Caco-2 (cell line): ENCODE measurements at regions of chr10 and their contacts with region 1.

Region 1: GRCh38 chr10:4391683-4392082 is 434.3 kb upstream of the AKR1E2 start:
- DNase-seq: peak in 1 of 2 experiments; percentile 25
- H3K4me3 ChIP-seq: no peak overlapping the region
- H3K4me3 Mint-ChIP-seq: no peak overlapping the region
- H3K27ac Mint-ChIP-seq: no peak overlapping the region
- H3K4me1 ChIP-seq: no peaks in the 10 kb centered on the region
- H3K4me1 Mint-ChIP-seq: no peaks in the 10 kb centered on the region
- H3K27me3 ChIP-seq: no peaks in the 10 kb centered on the region
- H3K27me3 Mint-ChIP-seq: peaks cover 14% of the 10 kb centered on the region
- CTCF ChIP-seq: peak in 1 of 2 experiments; percentile 25

Region 2: GRCh38 chr10:4329225-4329624 is 62.5 kb before region 1 on chr10:
- CTCF ChIA-PET with region 1: no interaction called
- POLR2A ChIA-PET with region 1: no interaction called
- intact Hi-C with region 1: loop called (anchors 2 kb)
- DNase-seq: no peak
- H3K4me3 ChIP-seq: no peak overlapping the region
- H3K4me3 Mint-ChIP-seq: no peak overlapping the region
- H3K27ac Mint-ChIP-seq: no peak overlapping the region
- H3K4me1 ChIP-seq: no peaks in the 10 kb centered on the region
- H3K4me1 Mint-ChIP-seq: no peaks in the 10 kb centered on the region
- H3K27me3 ChIP-seq: no peaks in the 10 kb centered on the region; the same call in 1 of the 2 replicates
- H3K27me3 Mint-ChIP-seq: peaks cover 13% of the 10 kb centered on the region
- CTCF ChIP-seq: no peak

Region 3: GRCh38 chr10:4372601-4373000 is 19.1 kb before region 1 on chr10:
- CTCF ChIA-PET with region 1: no interaction called
- POLR2A ChIA-PET with region 1: no interaction called
- intact Hi-C with region 1: loop called (anchors 1 kb)
- DNase-seq: no peak
- H3K4me3 ChIP-seq: no peak overlapping the region
- H3K4me3 Mint-ChIP-seq: no peak overlapping the region
- H3K27ac Mint-ChIP-seq: no peak overlapping the region
- H3K4me1 ChIP-seq: no peaks in the 10 kb centered on the region
- H3K4me1 Mint-ChIP-seq: no peaks in the 10 kb centered on the region
- H3K27me3 ChIP-seq: no peaks in the 10 kb centered on the region
- H3K27me3 Mint-ChIP-seq: peaks cover 27% of the 10 kb centered on the region
- CTCF ChIP-seq: no peak